Right ventricle myocardium inferior (tissue), 1 donor: ENCODE measurements at regions of chr11 and their contacts with region 1.

Region 1: DNA sequence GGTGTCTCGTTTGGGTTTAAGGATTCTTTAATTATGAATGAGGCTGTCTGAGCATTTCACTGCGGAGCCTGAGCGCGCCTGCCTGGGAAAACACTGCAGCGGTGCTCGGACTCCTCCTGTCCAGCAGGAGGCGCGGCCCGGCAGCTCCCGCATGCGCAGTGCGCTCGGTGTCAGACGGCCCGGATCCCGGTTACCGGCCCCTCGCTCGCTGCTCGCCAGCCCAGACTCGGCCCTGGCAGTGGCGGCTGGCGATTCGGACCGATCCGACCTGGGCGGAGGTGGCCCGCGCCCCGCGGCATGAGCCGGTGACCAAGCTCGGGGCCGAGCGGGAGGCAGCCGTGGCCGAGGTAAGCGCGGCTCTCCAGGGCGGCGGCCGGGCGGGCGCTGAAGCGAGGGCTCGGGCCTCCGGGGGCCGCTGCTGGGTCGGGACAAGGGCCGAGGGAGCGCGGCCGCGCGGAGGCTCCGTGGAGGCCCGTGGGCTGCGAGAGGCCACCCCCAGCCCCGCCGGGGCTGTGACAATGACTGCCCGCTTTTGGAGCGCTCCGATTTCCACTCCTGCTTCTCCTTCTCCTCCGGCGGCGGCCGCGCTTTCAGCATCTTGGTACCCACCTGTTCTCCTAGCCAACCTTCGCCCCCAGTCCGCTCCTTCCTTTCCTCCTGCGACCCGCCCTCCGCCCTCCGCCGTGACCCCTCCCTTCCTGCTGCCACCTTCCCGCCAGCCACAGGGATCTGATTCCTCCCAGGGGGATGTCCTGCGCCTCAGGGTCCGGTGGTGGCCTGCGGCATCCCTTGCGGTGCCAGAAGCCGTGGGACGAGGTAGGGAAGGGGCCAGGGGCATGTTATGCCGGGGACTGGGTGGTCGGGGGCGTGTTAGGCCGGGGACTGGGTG is at the start of gene EXT2:
- DNase-seq: peak; percentile 94
- ATAC-seq: peak; percentile 98
- total RNA-seq, gene EXT2: 30.7 TPM

Region 2: DNA sequence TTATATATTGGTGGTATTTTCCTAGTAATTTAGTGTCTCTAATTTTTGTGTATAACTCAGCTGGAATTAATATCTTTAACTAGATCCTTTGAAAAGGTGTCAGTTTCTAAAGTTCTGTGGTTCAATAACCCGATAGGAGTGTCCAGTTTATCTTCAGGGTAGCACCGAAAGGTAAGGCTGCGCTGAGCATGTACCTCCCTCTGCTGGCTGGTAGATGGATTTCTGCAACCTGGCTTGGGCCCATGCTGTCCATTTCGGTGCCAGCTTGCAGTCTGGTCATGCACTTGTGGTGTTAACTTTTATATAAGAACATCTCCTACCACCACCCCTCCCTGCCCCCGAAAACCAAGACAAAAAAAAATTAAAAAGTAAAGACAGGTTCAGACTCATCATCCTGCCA is 24.4 kb after region 1 on chr11:
- intact Hi-C with region 1: loop called (anchors 2 kb)
- DNase-seq: no peak
- ATAC-seq: peak; percentile 69